ENCODE measurements at regions of chr2 and their contacts with region 1.

Region 1: GRCh38 chr2:102473020-102473419 is at the start of gene SLC9A4:
- DNase-seq: no peak
- H3K4me3 ChIP-seq: no peak within 1 kb of the TSS
- H3K27ac ChIP-seq: no peak within 1 kb of the TSS
- H3K27me3 ChIP-seq: peaks cover 22% of the 10 kb centered on the region
- CTCF ChIP-seq: peak; percentile 87
- polyA plus RNA-seq, gene SLC9A4: not detected in 2 replicates

Region 2: GRCh38 chr2:102487761-102488466 is 14.9 kb after region 1 on chr2:
- CTCF ChIA-PET with region 1: interaction called, 34 read pairs
- POLR2A ChIA-PET with region 1: no interaction called
- DNase-seq: peak; percentile 34
- H3K4me3 ChIP-seq: no peak overlapping the region
- H3K27ac ChIP-seq: peak overlapping the region; percentile 39
- H3K27me3 ChIP-seq: peaks cover 18% of the 10 kb centered on the region
- CTCF ChIP-seq: no peak

Region 3: DNA sequence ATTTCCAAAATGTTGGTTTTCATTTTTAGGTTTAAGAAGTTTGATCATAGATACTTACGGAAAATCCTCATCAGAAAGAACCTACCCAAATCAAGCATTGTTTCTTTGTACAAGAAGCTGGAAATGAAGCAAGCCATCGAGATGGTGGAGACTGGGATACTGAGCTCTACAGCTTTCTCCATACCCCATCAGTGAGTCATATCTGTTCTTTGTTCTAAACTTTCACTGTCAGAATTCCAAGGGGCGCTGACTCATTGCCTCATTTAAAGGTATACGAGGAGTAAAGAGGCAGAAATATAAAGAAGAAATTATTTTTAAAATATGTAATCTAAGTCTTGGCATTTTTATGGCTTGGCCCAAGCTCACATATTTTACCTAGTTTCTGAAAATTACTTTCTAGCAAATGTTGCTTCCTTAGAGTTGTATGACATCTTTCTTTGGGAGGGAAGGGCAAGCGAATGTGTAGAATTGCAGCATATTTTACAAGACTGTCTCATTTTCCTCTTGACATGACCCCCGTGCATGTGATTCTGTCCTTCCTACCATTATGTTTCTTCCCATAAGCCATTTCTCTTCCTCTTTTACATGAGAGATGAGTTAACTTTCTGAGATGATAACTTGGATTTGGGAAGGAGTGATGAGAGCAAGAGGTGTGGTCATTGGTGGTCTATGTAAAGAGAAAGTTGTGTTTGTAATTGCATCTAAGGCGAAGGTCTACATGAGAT is 41.2 kb after region 1 on chr2:
- CTCF ChIA-PET with region 1: interaction called, 19 read pairs
- POLR2A ChIA-PET with region 1: no interaction called
- DNase-seq: peak; percentile 66
- H3K4me3 ChIP-seq: no peak overlapping the region; the same call in 1 of the 2 replicates
- H3K27ac ChIP-seq: no peak overlapping the region
- H3K27me3 ChIP-seq: no peaks in the 10 kb centered on the region
- CTCF ChIP-seq: no peak

Region 4: GRCh38 chr2:102592597-102592996 is 119.6 kb after region 1 on chr2:
- CTCF ChIA-PET with region 1: interaction called, 21 read pairs
- POLR2A ChIA-PET with region 1: no interaction called
- DNase-seq: no peak
- H3K4me3 ChIP-seq: no peak overlapping the region
- H3K27ac ChIP-seq: no peak overlapping the region
- H3K27me3 ChIP-seq: peaks cover 2% of the 10 kb centered on the region
- CTCF ChIP-seq: peak; percentile 49

Region 5: GRCh38 chr2:102615622-102616436 is 142.8 kb after region 1 on chr2:
- CTCF ChIA-PET with region 1: interaction called, 237 read pairs
- POLR2A ChIA-PET with region 1: no interaction called
- DNase-seq: peak; percentile 33
- H3K4me3 ChIP-seq: no peak overlapping the region
- H3K27ac ChIP-seq: no peak overlapping the region
- H3K27me3 ChIP-seq: peaks cover 41% of the 10 kb centered on the region
- CTCF ChIP-seq: peak; percentile 100

Region 6: DNA sequence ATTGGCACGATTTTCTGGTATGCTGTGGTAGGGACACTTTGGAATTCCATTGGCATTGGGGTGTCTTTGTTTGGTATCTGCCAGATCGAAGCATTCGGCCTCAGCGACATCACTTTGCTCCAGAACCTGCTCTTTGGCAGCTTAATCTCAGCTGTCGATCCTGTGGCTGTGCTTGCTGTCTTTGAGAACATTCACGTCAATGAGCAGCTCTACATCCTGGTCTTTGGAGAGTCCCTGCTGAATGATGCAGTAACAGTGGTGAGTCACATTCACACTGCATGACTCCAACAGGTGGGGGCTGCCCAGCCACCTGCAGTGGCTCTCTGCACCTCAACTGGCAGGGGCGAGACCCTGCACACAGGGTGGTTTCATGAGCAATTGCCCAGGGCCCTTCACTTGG is 184.8 kb after region 1 on chr2:
- CTCF ChIA-PET with region 1: no interaction called
- POLR2A ChIA-PET with region 1: no interaction called
- DNase-seq: no peak
- H3K4me3 ChIP-seq: no peak overlapping the region
- H3K27ac ChIP-seq: no peak overlapping the region
- H3K27me3 ChIP-seq: no peaks in the 10 kb centered on the region
- CTCF ChIP-seq: no peak

Region 7: DNA sequence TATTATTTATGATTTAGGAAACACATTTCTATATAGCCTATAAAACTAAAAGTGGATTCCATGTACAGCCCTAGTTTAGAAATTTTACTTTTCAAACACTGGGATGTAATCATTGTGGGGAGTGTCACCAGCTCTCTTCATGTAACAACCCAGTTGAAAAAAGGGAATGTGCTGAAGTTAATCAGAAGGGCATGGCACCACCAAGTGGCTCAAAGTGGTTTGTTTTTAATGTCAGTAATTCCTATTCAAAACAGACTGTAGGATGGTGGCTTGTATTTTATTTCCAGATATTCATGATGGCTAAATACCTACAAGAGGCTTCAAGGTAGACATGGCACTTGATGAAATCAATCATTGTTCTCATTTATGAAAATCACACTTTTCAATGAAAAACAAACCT is 230.7 kb after region 1 on chr2:
- CTCF ChIA-PET with region 1: interaction called, 18 read pairs
- POLR2A ChIA-PET with region 1: no interaction called
- DNase-seq: no peak
- H3K4me3 ChIP-seq: no peak overlapping the region
- H3K27ac ChIP-seq: no peak overlapping the region
- H3K27me3 ChIP-seq: peaks cover 3% of the 10 kb centered on the region
- CTCF ChIP-seq: peak; percentile 35

Region 8: GRCh38 chr2:102915128-102915527 is 442.1 kb after region 1 on chr2:
- CTCF ChIA-PET with region 1: no interaction called
- POLR2A ChIA-PET with region 1: no interaction called
- DNase-seq: no peak
- H3K4me3 ChIP-seq: no peak overlapping the region
- H3K27ac ChIP-seq: no peak overlapping the region
- H3K27me3 ChIP-seq: no peaks in the 10 kb centered on the region
- CTCF ChIP-seq: no peak

Measured in AG04450 (cell line).